ENCODE measurements at regions of chr9 and their contacts with region 1.

Region 1: DNA sequence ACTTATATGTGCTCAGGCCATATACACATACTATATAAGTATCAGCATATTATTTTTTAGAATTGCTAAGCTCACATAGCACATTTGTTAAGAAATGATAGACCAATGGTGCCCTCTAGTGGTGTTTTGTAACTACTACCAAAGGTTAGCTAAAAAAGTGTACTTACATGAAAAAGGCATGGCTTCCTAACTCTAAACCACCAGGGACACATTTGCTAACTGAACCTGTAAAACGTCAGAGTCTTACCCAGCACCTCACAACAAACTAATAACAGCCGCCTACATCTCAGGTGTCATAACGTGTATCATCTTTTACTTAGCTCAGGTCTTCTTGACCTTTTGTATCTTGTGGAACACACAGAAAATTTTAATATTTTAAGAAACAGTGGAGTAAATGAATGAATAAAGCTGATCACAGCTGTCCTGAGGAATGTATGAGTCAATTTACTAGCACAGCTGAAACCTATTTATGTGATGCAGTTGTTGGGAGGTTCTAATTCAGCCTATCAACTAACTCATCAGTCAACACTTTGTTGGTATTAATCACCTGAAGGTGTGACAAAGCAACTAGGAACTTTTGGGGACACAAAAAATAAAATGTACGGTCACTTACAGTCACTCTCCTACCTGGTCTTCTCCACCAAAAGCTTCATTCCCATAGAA is 72.9 kb downstream of the BAAT start:
- DNase-seq: peak; percentile 43
- CTCF ChIP-seq: peak; percentile 53

Region 2: DNA sequence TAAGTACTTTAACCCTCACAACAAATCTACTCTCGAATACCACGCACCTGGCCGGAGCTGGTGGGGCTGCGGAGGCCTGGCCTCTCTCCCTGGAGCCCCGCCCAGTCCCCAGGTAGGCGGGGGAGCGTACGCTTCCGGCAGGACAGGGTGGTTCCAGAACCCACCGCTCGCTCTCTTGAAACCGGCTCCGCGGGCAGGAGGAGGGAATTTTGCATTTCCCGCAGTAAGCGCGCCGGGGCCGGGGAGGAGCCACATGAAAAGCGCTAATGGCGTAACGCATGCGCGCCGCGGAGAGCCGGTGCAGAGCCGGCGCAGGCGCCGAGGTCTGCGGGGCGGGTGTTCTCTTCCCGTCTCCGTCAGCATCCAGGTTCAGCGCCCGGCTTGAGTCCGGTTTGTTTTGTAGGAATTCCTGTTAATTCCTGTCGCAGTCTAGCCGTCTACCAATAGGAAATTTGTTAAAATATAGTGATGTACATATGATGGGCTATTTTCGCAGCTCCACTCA is 713.2 kb before region 1 on chr9:
- CTCF ChIA-PET with region 1: interaction called, 70 read pairs
- POLR2A ChIA-PET with region 1: no interaction called
- DNase-seq: peak; percentile 74
- CTCF ChIP-seq: no peak

Region 3: DNA sequence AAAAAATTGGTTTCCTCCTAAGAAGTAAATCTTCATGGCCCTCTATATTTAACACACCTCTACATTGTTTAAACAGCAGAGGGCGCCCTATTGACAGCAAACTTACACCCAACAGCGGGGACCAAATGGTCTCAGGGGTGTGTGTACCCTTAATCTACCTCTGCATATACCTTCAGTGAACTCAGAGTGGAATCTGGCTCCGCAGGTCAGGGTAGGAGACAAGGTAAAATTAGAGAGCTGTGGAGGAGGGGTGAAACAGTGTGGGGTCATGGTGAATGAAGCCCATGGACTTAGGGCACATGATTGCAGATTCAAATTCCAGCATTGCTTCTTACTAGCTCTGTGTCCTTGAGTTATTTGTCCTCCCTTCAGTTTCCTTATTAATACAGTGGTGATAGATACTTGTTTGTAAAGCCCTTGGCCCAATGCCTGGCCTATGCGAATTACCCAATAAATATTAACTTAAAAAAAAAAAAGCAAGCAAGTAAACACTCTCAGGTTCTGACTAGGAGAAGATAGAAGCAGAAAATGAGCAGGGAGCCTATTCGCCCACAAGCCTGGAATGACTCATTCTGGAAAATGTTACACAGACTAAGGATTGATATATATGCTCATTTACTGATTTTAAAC is 611.1 kb before region 1 on chr9:
- CTCF ChIA-PET with region 1: interaction called, 32 read pairs
- POLR2A ChIA-PET with region 1: no interaction called
- DNase-seq: no peak
- CTCF ChIP-seq: peak; percentile 32

Region 4: GRCh38 chr9:100714372-100715099 is 597.4 kb before region 1 on chr9:
- CTCF ChIA-PET with region 1: interaction called, 50 read pairs
- POLR2A ChIA-PET with region 1: no interaction called
- DNase-seq: peak; percentile 62
- CTCF ChIP-seq: peak; percentile 79

Region 5: GRCh38 chr9:101119206-101119819 is 192.6 kb before region 1 on chr9:
- CTCF ChIA-PET with region 1: interaction called, 32 read pairs
- POLR2A ChIA-PET with region 1: no interaction called
- DNase-seq: peak; percentile 37
- CTCF ChIP-seq: peak; percentile 87

Region 6: GRCh38 chr9:101299901-101300300 is 12.0 kb before region 1 on chr9:
- CTCF ChIA-PET with region 1: interaction called, 12 read pairs
- POLR2A ChIA-PET with region 1: no interaction called
- DNase-seq: no peak
- CTCF ChIP-seq: no peak

Region 7: DNA sequence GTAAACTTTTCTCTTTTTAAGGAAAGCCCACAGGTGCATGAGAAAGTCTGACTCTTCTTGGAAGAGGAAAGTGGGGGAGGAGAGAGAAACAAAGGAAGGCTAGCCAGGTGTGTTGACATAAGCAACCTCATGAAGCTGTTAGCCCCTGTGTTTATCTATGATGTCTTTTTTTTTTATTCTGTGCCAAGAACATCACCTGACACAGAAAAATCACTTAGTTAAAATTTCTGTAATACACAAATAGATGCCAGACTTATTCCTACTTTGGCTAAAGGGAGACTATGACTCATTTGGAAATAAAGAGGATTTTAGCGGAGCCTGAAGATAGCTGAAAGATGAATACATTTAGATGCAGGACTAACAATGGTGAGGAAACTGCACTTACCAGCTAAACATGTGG is 14.6 kb after region 1 on chr9:
- CTCF ChIA-PET with region 1: interaction called, 12 read pairs
- POLR2A ChIA-PET with region 1: no interaction called
- DNase-seq: no peak
- CTCF ChIP-seq: no peak